Activated CD4-positive, alpha-beta memory T cell treated with anti-CD3 and anti-CD28 coated beads for 36 hours (primary cell): ENCODE measurements at regions of chr20 and their contacts with region 1.

Region 1: GRCh38 chr20:39264506-39265172 is 302.5 kb downstream of the DHX35 start:
- DNase-seq: peak; percentile 56
- H3K4me3 Mint-ChIP-seq: no peak overlapping the region
- H3K27ac Mint-ChIP-seq: no peak overlapping the region
- H3K4me1 Mint-ChIP-seq: no peaks in the 10 kb centered on the region
- H3K27me3 Mint-ChIP-seq: peaks cover 4% of the 10 kb centered on the region

Region 2: GRCh38 chr20:39278230-39278788 is 13.7 kb after region 1 on chr20:
- CTCF ChIA-PET with region 1: interaction called, 49 read pairs
- POLR2A ChIA-PET with region 1: no interaction called
- intact Hi-C with region 1: no loop called
- DNase-seq: no peak
- H3K4me3 Mint-ChIP-seq: no peak overlapping the region
- H3K27ac Mint-ChIP-seq: no peak overlapping the region
- H3K4me1 Mint-ChIP-seq: no peaks in the 10 kb centered on the region
- H3K27me3 Mint-ChIP-seq: peaks cover 2% of the 10 kb centered on the region

Region 3: DNA sequence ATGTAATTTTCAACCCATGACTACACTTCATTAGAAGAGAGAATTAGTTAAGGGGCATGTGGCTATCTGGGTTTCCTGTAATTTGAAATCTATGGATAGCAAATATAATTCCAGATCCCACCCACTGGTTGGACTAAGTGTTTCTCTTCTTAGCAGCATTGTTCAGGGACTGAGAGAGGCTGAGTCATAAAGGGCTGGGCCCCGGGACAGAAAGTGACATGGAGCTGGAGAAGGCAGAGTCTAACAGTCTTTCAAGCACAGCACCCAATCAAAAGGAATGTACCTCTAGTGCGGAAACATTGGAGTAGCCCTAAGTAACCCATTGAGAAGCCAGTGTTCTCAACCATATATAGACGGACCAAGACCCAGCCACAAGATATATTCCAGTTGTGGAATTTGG is 61.4 kb after region 1 on chr20:
- CTCF ChIA-PET with region 1: no interaction called
- POLR2A ChIA-PET with region 1: no interaction called
- intact Hi-C with region 1: no loop called
- DNase-seq: no peak
- H3K4me3 Mint-ChIP-seq: no peak overlapping the region
- H3K27ac Mint-ChIP-seq: no peak overlapping the region
- H3K4me1 Mint-ChIP-seq: no peaks in the 10 kb centered on the region
- H3K27me3 Mint-ChIP-seq: no peaks in the 10 kb centered on the region

Region 4: GRCh38 chr20:39874049-39874888 is 609.6 kb after region 1 on chr20:
- CTCF ChIA-PET with region 1: interaction called, 4 read pairs
- POLR2A ChIA-PET with region 1: no interaction called
- intact Hi-C with region 1: loop called (anchors 10 kb)
- DNase-seq: peak; percentile 45
- H3K4me3 Mint-ChIP-seq: no peak overlapping the region
- H3K27ac Mint-ChIP-seq: no peak overlapping the region
- H3K4me1 Mint-ChIP-seq: no peaks in the 10 kb centered on the region
- H3K27me3 Mint-ChIP-seq: no peaks in the 10 kb centered on the region

Region 5: DNA sequence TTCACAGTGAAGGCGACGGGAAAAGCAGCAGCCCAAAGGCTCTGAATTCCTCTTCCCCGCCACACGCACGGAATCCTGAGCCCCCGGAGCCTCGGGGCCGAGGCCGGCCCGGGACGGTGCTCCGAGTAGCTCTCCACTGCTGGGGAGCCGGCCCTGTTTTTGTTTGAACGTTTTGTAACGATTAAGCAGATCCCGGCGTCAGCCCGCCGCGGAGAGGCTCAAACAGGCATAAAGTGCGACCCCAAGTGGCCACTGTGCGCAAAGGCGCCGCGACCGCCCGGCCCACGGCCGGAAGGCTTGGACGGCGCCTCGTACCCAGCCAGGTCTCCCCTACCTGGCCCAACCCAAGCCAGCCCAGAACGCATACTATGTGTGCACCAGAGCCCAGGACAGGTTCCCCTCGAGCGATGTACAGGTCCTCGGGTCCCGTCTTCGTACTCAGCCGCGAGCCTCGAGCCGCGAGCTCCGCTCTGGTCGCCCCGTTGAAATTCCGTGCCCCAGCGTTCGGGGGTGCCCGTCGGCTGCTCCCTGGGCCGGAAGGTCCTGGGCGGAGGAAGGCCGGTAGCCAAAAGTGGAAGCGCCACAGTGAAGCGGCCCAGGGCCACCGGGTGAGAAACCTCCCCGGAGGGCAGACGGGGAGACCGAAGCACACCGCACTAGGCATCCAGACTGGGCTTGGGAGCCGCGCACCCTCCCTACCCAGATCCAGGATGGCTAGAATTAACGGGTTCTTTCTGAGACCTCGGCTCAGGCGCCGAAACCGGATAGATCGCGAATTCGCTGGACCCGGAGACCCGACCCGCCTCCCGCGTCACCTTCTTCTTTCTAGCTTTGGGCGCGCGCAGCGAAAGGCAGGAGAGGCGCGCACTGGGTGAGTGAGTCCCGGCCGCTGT is 1425.5 kb after region 1 on chr20:
- CTCF ChIA-PET with region 1: interaction called, 4 read pairs
- POLR2A ChIA-PET with region 1: no interaction called
- intact Hi-C with region 1: loop called (anchors 10 kb)
- DNase-seq: peak; percentile 82
- H3K4me3 Mint-ChIP-seq: peak overlapping the region; percentile 64
- H3K27ac Mint-ChIP-seq: no peak overlapping the region
- H3K4me1 Mint-ChIP-seq: peaks cover 13% of the 10 kb centered on the region
- H3K27me3 Mint-ChIP-seq: peaks cover 78% of the 10 kb centered on the region